Activated naive CD4-positive, alpha-beta T cell treated with anti-CD3 and anti-CD28 coated beads for 36 hours (primary cell): ENCODE measurements at regions of chr3 and their contacts with region 1.

Region 1: DNA sequence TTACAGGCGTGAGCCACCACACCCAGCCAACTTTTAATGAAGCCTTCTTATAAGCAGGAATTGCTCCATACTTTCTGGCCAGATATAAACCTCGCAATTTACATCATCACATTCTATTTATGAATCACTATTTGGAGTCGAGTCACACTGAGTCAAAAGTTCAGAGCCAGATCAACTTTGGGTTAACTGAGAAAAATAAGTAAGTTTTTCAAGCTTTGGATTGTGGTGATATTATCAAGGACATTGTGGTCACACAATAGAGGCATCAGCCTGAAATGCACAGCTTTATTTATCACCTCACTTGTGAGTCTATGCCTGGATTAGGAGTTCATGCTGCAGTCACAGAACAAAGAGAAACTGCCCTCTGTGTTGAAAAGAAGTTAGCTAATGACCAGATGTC is 1163.5 kb downstream of the ROBO1 start:
- DNase-seq: no peak
- H3K4me3 Mint-ChIP-seq: no peak overlapping the region
- H3K27ac Mint-ChIP-seq: no peak overlapping the region
- H3K4me1 Mint-ChIP-seq: no peaks in the 10 kb centered on the region
- H3K27me3 Mint-ChIP-seq: no peaks in the 10 kb centered on the region

Region 2: DNA sequence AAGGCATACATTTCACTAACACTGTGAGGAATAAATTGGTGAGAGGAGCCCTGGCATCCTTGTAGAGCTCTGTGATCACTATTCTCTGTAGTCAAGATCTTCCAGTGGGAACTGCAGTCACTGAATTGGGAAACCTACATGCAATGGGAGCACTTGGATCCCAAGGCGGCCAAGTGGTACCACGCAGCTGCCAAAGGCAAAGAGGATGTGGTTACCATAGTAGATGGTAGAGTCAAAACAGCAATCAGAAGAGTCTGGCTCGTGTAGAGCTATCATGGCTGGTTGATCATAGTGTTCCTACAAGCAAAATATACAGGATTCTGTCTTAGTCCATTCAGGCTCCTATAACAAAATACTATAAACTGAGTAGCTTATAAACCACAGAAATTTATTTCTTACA is 714.7 kb before region 1 on chr3:
- CTCF ChIA-PET with region 1: no interaction called
- intact Hi-C with region 1: loop called (anchors 5 kb)
- DNase-seq: no peak
- H3K4me3 Mint-ChIP-seq: no peak overlapping the region
- H3K27ac Mint-ChIP-seq: no peak overlapping the region
- H3K4me1 Mint-ChIP-seq: no peaks in the 10 kb centered on the region
- H3K27me3 Mint-ChIP-seq: no peaks in the 10 kb centered on the region